Calu3 (cell line): ENCODE measurements at regions of chr3 and their contacts with region 1.

Region 1: GRCh38 chr3:30538787-30539186 is 67.6 kb upstream of the TGFBR2 start:
- DNase-seq: no peak
- H3K4me3 Mint-ChIP-seq: peak overlapping the region; percentile 24
- H3K27ac Mint-ChIP-seq: peak overlapping the region; percentile 43
- H3K4me1 Mint-ChIP-seq: peaks cover 18% of the 10 kb centered on the region
- H3K27me3 Mint-ChIP-seq: no peaks in the 10 kb centered on the region
- CTCF ChIP-seq: no peak

Region 2: GRCh38 chr3:30342319-30343060 is 196.3 kb before region 1 on chr3:
- CTCF ChIA-PET with region 1: no interaction called
- intact Hi-C with region 1: loop called (anchors 2 kb)
- DNase-seq: peak; percentile 63
- H3K4me3 Mint-ChIP-seq: peak overlapping the region; percentile 46
- H3K27ac Mint-ChIP-seq: peak overlapping the region; percentile 40
- H3K4me1 Mint-ChIP-seq: peaks cover 58% of the 10 kb centered on the region
- H3K27me3 Mint-ChIP-seq: no peaks in the 10 kb centered on the region
- CTCF ChIP-seq: no peak

Region 3: GRCh38 chr3:30582057-30582456 is 43.3 kb after region 1 on chr3:
- CTCF ChIA-PET with region 1: no interaction called
- intact Hi-C with region 1: loop called (anchors 1 kb)
- DNase-seq: no peak
- H3K4me3 Mint-ChIP-seq: no peak overlapping the region
- H3K27ac Mint-ChIP-seq: peak overlapping the region; percentile 51
- H3K4me1 Mint-ChIP-seq: peaks cover 69% of the 10 kb centered on the region
- H3K27me3 Mint-ChIP-seq: no peaks in the 10 kb centered on the region
- CTCF ChIP-seq: no peak

Region 4: DNA sequence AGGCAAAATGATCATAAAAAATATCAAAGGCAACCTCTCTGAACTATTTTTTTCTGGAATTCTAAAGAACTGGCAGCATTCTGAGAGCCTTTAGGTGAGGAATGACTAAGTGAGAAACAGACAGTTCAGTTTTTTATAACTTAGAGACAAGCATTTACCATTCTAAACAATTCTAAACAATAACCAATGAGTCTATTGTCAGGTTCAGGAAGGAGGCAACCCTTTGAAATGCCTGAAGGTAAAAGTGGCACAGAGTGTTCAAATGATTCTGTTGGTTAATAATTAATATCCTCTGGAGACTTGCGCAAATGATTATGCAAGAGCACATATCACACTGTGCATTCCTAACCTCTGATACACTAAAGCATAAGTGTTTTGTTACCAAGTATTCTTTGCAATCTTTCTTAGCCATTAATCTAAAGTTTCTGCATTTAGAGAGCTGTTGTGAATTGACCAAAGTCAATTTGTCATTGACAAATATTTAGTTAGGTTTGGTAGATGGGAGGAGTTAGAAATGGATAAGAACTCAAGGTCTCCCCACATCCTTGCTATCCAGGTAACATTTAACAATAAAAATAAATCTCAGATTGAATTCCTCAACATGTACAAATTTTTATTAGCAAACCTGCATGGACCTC is 58.5 kb after region 1 on chr3:
- CTCF ChIA-PET with region 1: no interaction called
- intact Hi-C with region 1: loop called (anchors 1 kb)
- DNase-seq: peak; percentile 45
- H3K4me3 Mint-ChIP-seq: no peak overlapping the region
- H3K27ac Mint-ChIP-seq: peak overlapping the region; percentile 91
- H3K4me1 Mint-ChIP-seq: peaks cover 48% of the 10 kb centered on the region
- H3K27me3 Mint-ChIP-seq: no peaks in the 10 kb centered on the region
- CTCF ChIP-seq: no peak

Region 5: DNA sequence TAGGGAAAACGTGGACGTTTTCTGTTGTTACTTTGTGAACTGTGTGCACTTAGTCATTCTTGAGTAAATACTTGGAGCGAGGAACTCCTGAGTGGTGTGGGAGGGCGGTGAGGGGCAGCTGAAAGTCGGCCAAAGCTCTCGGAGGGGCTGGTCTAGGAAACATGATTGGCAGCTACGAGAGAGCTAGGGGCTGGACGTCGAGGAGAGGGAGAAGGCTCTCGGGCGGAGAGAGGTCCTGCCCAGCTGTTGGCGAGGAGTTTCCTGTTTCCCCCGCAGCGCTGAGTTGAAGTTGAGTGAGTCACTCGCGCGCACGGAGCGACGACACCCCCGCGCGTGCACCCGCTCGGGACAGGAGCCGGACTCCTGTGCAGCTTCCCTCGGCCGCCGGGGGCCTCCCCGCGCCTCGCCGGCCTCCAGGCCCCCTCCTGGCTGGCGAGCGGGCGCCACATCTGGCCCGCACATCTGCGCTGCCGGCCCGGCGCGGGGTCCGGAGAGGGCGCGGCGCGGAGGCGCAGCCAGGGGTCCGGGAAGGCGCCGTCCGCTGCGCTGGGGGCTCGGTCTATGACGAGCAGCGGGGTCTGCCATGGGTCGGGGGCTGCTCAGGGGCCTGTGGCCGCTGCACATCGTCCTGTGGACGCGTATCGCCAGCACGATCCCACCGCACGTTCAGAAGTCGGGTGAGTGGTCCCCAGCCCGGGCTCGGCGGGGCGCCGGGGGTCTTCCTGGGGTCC is 67.7 kb after region 1 on chr3 and contains the start of gene TGFBR2:
- CTCF ChIA-PET with region 1: no interaction called
- intact Hi-C with region 1: loop called (anchors 2 kb)
- DNase-seq: peak; percentile 95
- H3K4me3 Mint-ChIP-seq: peak within 1 kb of the TSS; percentile 66
- H3K27ac Mint-ChIP-seq: peak within 1 kb of the TSS; percentile 82
- H3K4me1 Mint-ChIP-seq: peaks cover 49% of the 10 kb centered on the region
- H3K27me3 Mint-ChIP-seq: no peaks in the 10 kb centered on the region
- CTCF ChIP-seq: no peak
- total RNA-seq, gene TGFBR2: 103 and 105 TPM in 2 replicates

Region 6: DNA sequence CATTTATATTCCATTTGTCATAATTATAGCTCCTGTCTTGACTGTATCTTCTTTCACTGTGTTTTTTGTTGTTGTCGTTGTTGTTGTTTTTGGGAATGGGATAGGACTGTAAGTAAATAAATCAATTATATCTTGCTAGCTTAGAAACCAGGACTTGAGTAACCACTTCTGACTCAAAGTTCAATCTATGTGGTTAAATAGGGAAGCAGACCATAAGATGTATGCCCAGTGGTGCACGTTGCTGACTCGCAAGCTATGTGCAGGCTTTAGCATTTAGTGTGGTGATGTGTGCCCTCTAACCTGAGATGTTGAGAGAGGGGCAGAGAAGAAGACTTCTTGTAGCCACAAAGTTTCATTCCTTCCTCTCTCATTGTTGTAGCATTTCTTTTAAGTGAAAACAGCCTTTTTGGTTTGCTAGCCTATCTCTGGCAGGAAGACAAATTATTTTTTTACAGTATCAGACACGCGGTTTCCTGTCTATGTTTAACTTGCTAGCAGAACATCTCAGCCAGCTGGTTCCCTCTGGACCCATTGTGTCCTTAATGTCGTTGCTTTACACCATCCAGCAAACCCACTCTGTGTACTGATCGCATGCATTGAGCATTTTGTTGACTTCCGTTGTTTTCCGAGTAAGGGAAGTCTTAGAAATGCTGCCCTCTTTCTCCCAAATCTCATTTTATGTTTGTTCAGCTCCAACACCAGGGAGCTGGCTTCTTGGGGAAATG is 119.7 kb after region 1 on chr3:
- CTCF ChIA-PET with region 1: no interaction called
- intact Hi-C with region 1: loop called (anchors 1 kb)
- DNase-seq: no peak
- H3K4me3 Mint-ChIP-seq: peak overlapping the region; percentile 31
- H3K27ac Mint-ChIP-seq: peak overlapping the region; percentile 66
- H3K4me1 Mint-ChIP-seq: peaks cover 57% of the 10 kb centered on the region
- H3K27me3 Mint-ChIP-seq: no peaks in the 10 kb centered on the region
- CTCF ChIP-seq: no peak